ENCODE measurements at regions of chr13 and their contacts with region 1.

Region 1: DNA sequence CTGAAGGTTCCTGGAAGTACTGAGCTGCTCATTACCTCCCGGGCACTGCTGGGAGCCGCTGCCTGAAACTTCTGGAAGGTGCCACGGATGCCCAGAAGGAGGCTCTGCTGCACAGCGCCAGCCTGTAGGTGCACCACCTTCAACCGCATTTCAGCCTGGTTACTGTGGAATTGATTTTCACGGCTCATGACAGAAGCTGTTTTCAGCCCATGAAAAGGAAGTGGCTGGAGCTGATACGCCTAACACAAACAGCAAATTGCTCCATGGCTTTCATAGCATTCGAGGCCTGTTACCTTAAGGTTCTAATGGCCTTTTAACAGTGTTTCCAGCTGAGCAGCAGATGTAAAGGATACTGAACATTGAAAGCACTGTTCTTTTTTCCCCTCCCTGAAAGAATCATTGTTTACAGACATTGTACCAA is 22.0 kb downstream of the GPC6 start:
- DNase-seq: peak; percentile 78
- ATAC-seq: peak; percentile 96
- H3K4me3 ChIP-seq: no peak overlapping the region
- H3K27ac ChIP-seq: peak overlapping the region; percentile 91
- H3K4me1 ChIP-seq: peaks cover 26% of the 10 kb centered on the region
- H3K27me3 ChIP-seq: no peaks in the 10 kb centered on the region
- CTCF ChIP-seq: peak; percentile 81

Region 2: GRCh38 chr13:93476175-93476574 is 227.5 kb after region 1 on chr13:
- CTCF ChIA-PET with region 1: no interaction called
- POLR2A ChIA-PET with region 1: no interaction called
- intact Hi-C with region 1: loop called (anchors 2 kb)
- DNase-seq: peak; percentile 82
- ATAC-seq: peak; percentile 48
- H3K4me3 ChIP-seq: peak overlapping the region; percentile 44; the same call in 1 of the 2 replicates
- H3K27ac ChIP-seq: peak overlapping the region; percentile 32; the same call in 1 of the 2 replicates
- H3K4me1 ChIP-seq: peaks cover 29% of the 10 kb centered on the region
- H3K27me3 ChIP-seq: no peaks in the 10 kb centered on the region
- CTCF ChIP-seq: no peak

Region 3: GRCh38 chr13:93687261-93687660 is 438.6 kb after region 1 on chr13:
- CTCF ChIA-PET with region 1: no interaction called
- POLR2A ChIA-PET with region 1: no interaction called
- intact Hi-C with region 1: loop called (anchors 2 kb)
- DNase-seq: no peak
- ATAC-seq: no peak
- H3K4me3 ChIP-seq: no peak overlapping the region
- H3K27ac ChIP-seq: no peak overlapping the region
- H3K4me1 ChIP-seq: no peaks in the 10 kb centered on the region
- H3K27me3 ChIP-seq: no peaks in the 10 kb centered on the region
- CTCF ChIP-seq: no peak

Region 4: GRCh38 chr13:93775507-93776108 is 527.0 kb after region 1 on chr13:
- CTCF ChIA-PET with region 1: no interaction called
- POLR2A ChIA-PET with region 1: no interaction called
- intact Hi-C with region 1: loop called (anchors 2 kb)
- DNase-seq: peak; percentile 74
- ATAC-seq: peak; percentile 40
- H3K4me3 ChIP-seq: peak overlapping the region; percentile 51
- H3K27ac ChIP-seq: peak overlapping the region; percentile 86
- H3K4me1 ChIP-seq: peaks cover 56% of the 10 kb centered on the region
- H3K27me3 ChIP-seq: no peaks in the 10 kb centered on the region
- CTCF ChIP-seq: no peak

Region 5: DNA sequence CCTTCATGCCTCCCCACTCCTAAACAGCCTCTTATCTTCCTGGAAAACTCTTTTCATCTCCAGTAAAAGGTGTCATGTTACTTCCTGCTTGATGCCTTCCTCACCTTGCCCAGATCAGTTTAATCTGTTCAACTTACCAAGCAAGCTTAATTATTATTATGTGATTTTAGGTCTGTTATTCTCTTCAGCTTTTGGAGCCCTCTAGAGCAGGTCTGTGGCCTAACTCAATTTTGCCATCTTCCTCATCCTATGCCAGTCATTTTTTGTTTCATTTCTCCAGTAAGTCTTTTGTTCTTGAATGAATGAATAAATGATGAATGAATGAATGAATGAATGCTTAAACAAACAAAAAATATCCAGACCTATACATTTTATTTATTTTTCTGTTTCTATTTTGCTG is 702.5 kb after region 1 on chr13:
- CTCF ChIA-PET with region 1: no interaction called
- POLR2A ChIA-PET with region 1: no interaction called
- intact Hi-C with region 1: loop called (anchors 2 kb)
- DNase-seq: peak; percentile 7
- ATAC-seq: peak; percentile 56
- H3K4me3 ChIP-seq: no peak overlapping the region
- H3K27ac ChIP-seq: no peak overlapping the region
- H3K4me1 ChIP-seq: no peaks in the 10 kb centered on the region
- H3K27me3 ChIP-seq: no peaks in the 10 kb centered on the region
- CTCF ChIP-seq: peak; percentile 47; the same call in 1 of the 2 replicates

Region 6: GRCh38 chr13:94268661-94269060 is 1020.0 kb after region 1 on chr13:
- CTCF ChIA-PET with region 1: no interaction called
- POLR2A ChIA-PET with region 1: no interaction called
- intact Hi-C with region 1: loop called (anchors 1 kb)
- DNase-seq: peak; percentile 11
- ATAC-seq: peak; percentile 39; the same call in 1 of the 2 replicates
- H3K4me3 ChIP-seq: no peak overlapping the region
- H3K27ac ChIP-seq: no peak overlapping the region
- H3K4me1 ChIP-seq: peaks cover 7% of the 10 kb centered on the region
- H3K27me3 ChIP-seq: no peaks in the 10 kb centered on the region
- CTCF ChIP-seq: no peak

Measured in PC-3 (cell line).